ENCODE measurements at regions of chr13 and their contacts with region 1.

Region 1: DNA sequence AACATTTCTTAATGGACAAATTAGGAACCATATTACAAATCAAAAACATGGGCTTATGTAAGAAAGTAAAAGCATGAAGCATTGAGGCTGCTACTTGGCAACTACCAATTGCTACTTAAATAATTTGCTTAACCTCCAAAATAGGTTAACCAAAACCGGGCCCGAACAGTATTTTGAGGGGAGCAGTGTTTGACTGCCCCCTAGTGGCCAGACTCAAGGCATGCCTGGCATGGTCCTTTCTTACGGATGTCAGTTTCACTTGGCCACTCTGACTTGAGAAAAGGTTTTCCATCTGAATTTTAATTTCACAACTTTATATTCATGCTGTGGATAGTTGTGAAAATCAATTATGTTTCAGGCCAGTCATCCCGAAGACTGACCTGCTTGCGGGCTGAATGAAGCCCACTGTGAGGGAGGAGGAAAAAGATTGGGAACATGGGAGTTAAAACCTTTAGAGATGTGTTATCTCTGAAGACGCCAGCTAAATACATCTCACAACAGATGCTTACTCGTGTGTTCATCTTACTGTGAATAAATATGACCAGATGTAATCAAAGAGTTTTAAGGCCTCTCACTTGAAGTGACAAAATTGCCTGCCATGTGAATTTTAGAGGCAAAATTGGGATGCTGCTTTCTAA is 2.9 kb downstream of the RXFP2 start:
- DNase-seq: peak in 1 of 2 experiments; percentile 22
- H3K4me3 ChIP-seq: no peak overlapping the region
- H3K27ac ChIP-seq: no peak overlapping the region
- H3K4me1 ChIP-seq: no peaks in the 10 kb centered on the region
- H3K27me3 ChIP-seq: peaks cover 18% of the 10 kb centered on the region; the same call in 1 of the 2 replicates
- CTCF ChIP-seq: peak; percentile 97

Region 2: DNA sequence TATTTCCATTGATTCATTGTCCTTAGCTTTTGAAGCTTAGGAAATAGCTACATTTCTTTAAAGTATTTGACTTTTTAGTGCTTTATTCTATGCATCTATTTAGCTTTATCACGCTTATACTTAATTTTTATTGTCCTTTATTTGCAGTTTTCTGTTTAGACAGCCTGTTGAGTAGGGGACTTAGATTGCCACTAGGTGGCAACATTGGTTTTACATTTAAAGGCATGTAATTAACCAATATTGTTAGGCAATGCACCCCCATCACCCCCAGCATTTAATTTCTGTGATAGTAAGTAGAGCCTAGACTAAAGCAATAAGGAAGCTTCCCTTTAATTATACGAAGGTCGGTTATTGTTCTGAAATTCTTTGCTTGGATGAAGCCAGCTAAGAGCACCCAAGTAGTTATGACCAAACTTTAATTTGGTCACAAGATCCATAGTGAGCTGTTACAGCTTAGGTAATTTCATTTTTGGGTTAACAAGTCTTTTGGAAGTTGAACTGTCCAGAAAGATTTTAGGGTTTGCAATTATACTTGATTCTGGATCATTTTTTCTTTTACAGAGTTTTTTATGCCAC is 505.9 kb before region 1 on chr13:
- CTCF ChIA-PET with region 1: no interaction called
- POLR2A ChIA-PET with region 1: no interaction called
- intact Hi-C with region 1: loop called (anchors 5 kb)
- DNase-seq: peak in 1 of 2 experiments; percentile 2
- H3K4me3 ChIP-seq: no peak overlapping the region
- H3K27ac ChIP-seq: no peak overlapping the region
- H3K4me1 ChIP-seq: no peaks in the 10 kb centered on the region
- H3K27me3 ChIP-seq: no peaks in the 10 kb centered on the region
- CTCF ChIP-seq: peak; percentile 88

Region 3: GRCh38 chr13:31301119-31301518 is 441.1 kb before region 1 on chr13:
- CTCF ChIA-PET with region 1: no interaction called
- POLR2A ChIA-PET with region 1: no interaction called
- intact Hi-C with region 1: no loop called
- DNase-seq: no peak
- H3K4me3 ChIP-seq: no peak overlapping the region
- H3K27ac ChIP-seq: no peak overlapping the region
- H3K4me1 ChIP-seq: no peaks in the 10 kb centered on the region
- H3K27me3 ChIP-seq: no peaks in the 10 kb centered on the region
- CTCF ChIP-seq: no peak

Region 4: GRCh38 chr13:31431722-31432137 is 310.5 kb before region 1 on chr13:
- CTCF ChIA-PET with region 1: no interaction called
- POLR2A ChIA-PET with region 1: no interaction called
- intact Hi-C with region 1: loop called (anchors 1 kb)
- DNase-seq: peak in 1 of 2 experiments; percentile 10
- H3K4me3 ChIP-seq: no peak overlapping the region
- H3K27ac ChIP-seq: no peak overlapping the region
- H3K4me1 ChIP-seq: no peaks in the 10 kb centered on the region
- H3K27me3 ChIP-seq: peaks cover 41% of the 10 kb centered on the region; the same call in 1 of the 2 replicates
- CTCF ChIP-seq: peak; percentile 82